ENCODE measurements at regions of chr3 and their contacts with region 1.

Region 1: DNA sequence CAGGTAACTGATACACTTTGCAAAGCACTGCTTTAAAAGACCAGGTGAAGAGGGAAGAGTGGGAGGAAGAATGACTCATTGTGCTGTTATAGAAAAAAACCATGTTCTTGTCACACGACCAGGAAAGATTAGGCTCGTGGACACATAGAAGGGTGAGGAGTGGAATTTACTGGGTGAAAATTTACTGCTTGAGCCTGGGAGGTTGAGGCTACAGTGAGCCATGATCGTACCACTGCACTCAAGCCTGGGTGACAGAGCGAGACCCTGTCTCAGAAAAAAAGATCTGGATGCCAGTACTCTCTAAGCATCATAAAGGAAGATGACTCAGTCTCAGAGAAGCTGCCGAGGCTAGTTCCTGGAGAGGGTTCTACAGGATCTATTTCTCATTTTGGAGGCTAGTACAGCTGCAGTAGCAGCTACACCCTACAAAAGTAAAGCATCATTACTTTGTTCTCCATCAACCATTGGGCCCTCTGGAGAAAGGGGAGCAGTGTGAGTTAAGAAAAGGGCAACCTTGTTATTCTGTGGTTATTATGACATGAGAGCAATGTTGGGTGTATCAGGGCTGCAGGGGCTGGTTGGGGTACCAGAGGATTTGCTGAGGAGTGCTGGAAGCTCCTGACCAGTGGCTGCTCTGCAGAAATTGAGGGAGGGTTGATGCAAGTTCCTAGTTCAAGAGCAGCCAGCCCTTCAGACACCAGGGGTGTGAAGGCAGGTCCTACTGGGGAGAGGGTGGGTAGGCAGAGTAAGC is 75.4 kb downstream of the CMTM8 start:
- DNase-seq: peak; percentile 76
- ATAC-seq: peak; percentile 95
- H3K4me3 ChIP-seq: peak overlapping the region; percentile 50; the same call in 1 of the 2 replicates
- H3K27ac ChIP-seq: peak overlapping the region; percentile 13; the same call in 1 of the 2 replicates
- H3K4me1 ChIP-seq: peaks cover 16% of the 10 kb centered on the region
- H3K27me3 ChIP-seq: no peaks in the 10 kb centered on the region
- CTCF ChIP-seq: no peak

Region 2: GRCh38 chr3:32126305-32127015 is 187.4 kb before region 1 on chr3:
- CTCF ChIA-PET with region 1: no interaction called
- POLR2A ChIA-PET with region 1: no interaction called
- intact Hi-C with region 1: no loop called
- DNase-seq: no peak
- ATAC-seq: no peak
- H3K4me3 ChIP-seq: no peak overlapping the region
- H3K27ac ChIP-seq: no peak overlapping the region
- H3K4me1 ChIP-seq: peaks cover 1% of the 10 kb centered on the region; the same call in 1 of the 2 replicates
- H3K27me3 ChIP-seq: no peaks in the 10 kb centered on the region
- CTCF ChIP-seq: no peak

Region 3: GRCh38 chr3:32325957-32326356 is 12.1 kb after region 1 on chr3:
- CTCF ChIA-PET with region 1: interaction called, 11 read pairs
- POLR2A ChIA-PET with region 1: no interaction called
- intact Hi-C with region 1: no loop called
- DNase-seq: peak; percentile 83
- ATAC-seq: peak; percentile 43
- H3K4me3 ChIP-seq: no peak overlapping the region
- H3K27ac ChIP-seq: no peak overlapping the region
- H3K4me1 ChIP-seq: peaks cover 11% of the 10 kb centered on the region; the same call in 1 of the 2 replicates
- H3K27me3 ChIP-seq: no peaks in the 10 kb centered on the region
- CTCF ChIP-seq: no peak